Activated T-helper 2 cell treated with anti-CD3 and anti-CD28 coated beads, Interferon-gamma antibody, Interleukin-2, Interleukin-4, amounts not matched to agents 10 μg/mL and 5 μg/mL and 100 μg/mL, durations not matched to agents 14 hours and 24 hours and 36 hours (primary cell): ENCODE measurements at regions of chr11 and their contacts with region 1.

Region 1: DNA sequence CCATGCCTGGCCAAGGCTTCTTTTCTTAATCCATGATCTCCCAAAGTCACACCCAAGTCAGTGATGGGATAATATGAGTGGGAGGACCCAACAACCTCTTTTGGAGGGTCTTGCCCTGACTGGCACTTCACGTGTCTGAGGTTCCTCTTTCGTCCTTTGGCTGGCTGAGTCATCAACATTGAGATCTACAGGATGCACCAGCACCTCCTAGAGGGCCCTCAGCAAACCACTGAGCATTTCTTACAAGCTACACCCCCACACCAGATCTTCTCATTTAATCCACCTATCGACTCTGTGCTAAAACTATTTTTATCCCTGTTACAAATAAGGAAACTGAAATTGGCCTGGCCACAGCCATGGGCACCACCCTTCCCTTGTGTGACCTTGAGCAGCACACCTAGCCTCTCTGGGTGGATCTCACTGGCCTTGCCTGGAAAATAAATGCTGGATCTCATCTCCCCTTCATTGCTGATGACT is 63.4 kb downstream of the FLI1 start:
- DNase-seq: peak; percentile 53
- H3K4me3 Mint-ChIP-seq: peak overlapping the region; percentile 45
- H3K27ac Mint-ChIP-seq: peak overlapping the region; percentile 90
- H3K4me1 Mint-ChIP-seq: peaks cover 55% of the 10 kb centered on the region
- H3K27me3 Mint-ChIP-seq: no peaks in the 10 kb centered on the region

Region 2: GRCh38 chr11:128172046-128172878 is 585.0 kb before region 1 on chr11:
- intact Hi-C with region 1: loop called (anchors 1 kb)
- DNase-seq: peak; percentile 72
- H3K4me3 Mint-ChIP-seq: no peak overlapping the region
- H3K27ac Mint-ChIP-seq: peak overlapping the region; percentile 54
- H3K4me1 Mint-ChIP-seq: peaks cover 35% of the 10 kb centered on the region
- H3K27me3 Mint-ChIP-seq: peaks cover 6% of the 10 kb centered on the region

Region 3: GRCh38 chr11:128232588-128232987 is 524.7 kb before region 1 on chr11:
- intact Hi-C with region 1: no loop called
- DNase-seq: no peak
- H3K4me3 Mint-ChIP-seq: no peak overlapping the region
- H3K27ac Mint-ChIP-seq: peak overlapping the region; percentile 81
- H3K4me1 Mint-ChIP-seq: peaks cover 58% of the 10 kb centered on the region
- H3K27me3 Mint-ChIP-seq: no peaks in the 10 kb centered on the region

Region 4: GRCh38 chr11:128630367-128631230 is 126.7 kb before region 1 on chr11:
- intact Hi-C with region 1: loop called (anchors 1 kb)
- DNase-seq: peak; percentile 81
- H3K4me3 Mint-ChIP-seq: peak overlapping the region; percentile 28
- H3K27ac Mint-ChIP-seq: peak overlapping the region; percentile 97
- H3K4me1 Mint-ChIP-seq: peaks cover 59% of the 10 kb centered on the region
- H3K27me3 Mint-ChIP-seq: no peaks in the 10 kb centered on the region

Region 5: GRCh38 chr11:128720522-128720985 is 36.7 kb before region 1 on chr11:
- intact Hi-C with region 1: loop called (anchors 5 kb)
- DNase-seq: no peak
- H3K4me3 Mint-ChIP-seq: peak overlapping the region; percentile 74
- H3K27ac Mint-ChIP-seq: peak overlapping the region; percentile 81
- H3K4me1 Mint-ChIP-seq: peaks cover 92% of the 10 kb centered on the region
- H3K27me3 Mint-ChIP-seq: no peaks in the 10 kb centered on the region

Region 6: GRCh38 chr11:128831174-128832120 is 74.2 kb after region 1 on chr11:
- intact Hi-C with region 1: loop called (anchors 1 kb)
- DNase-seq: peak; percentile 75
- H3K4me3 Mint-ChIP-seq: peak overlapping the region; percentile 6
- H3K27ac Mint-ChIP-seq: peak overlapping the region; percentile 86
- H3K4me1 Mint-ChIP-seq: peaks cover 18% of the 10 kb centered on the region
- H3K27me3 Mint-ChIP-seq: peaks cover 5% of the 10 kb centered on the region

Region 7: DNA sequence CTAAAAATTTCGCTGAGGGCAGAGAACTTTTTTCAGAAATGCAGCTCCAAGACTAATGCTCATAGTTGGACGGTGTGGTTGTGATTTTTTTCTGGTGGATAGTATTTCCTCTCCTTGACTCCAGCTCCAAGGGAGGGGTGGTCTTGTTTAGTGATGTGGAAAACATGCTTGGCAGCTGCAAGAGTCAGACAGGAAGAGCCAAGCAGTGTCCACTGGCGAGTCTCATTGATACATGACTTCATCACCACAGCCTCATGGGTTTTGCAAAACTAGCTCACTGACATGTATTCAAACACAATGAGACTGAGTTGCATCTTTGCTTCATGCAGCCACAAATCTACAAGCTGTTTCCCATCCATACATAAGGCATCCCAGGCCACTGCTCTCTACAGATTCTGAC is 117.2 kb after region 1 on chr11:
- intact Hi-C with region 1: no loop called
- DNase-seq: no peak
- H3K4me3 Mint-ChIP-seq: no peak overlapping the region
- H3K27ac Mint-ChIP-seq: no peak overlapping the region
- H3K4me1 Mint-ChIP-seq: no peaks in the 10 kb centered on the region
- H3K27me3 Mint-ChIP-seq: peaks cover 26% of the 10 kb centered on the region